ENCODE measurements at regions of chr21 and their contacts with region 1.

Region 1: DNA sequence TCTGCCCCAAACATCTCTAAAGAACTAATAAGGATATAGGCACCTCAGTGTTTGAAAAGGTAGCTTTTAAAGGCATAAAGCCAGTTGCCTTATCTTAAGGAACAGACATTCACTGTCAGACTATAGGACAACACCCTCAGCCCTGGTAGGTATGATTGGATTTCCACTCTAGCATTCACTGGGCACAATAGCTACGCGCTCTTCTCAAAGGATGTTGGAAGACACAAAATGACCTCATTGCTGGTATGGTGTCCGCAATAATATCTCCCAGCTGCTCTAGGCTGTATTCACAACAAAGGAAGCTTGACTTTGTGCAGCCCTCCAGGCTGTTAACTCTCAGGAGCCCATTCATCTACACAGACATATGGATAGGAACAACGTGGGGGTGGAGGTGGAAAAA is 119.4 kb upstream of the CXADR start:
- DNase-seq: no peak
- H3K4me3 ChIP-seq: no peak overlapping the region
- H3K27ac ChIP-seq: no peak overlapping the region
- H3K4me1 ChIP-seq: no peaks in the 10 kb centered on the region
- H3K27me3 ChIP-seq: no peaks in the 10 kb centered on the region
- CTCF ChIP-seq: no peak

Region 2: GRCh38 chr21:16908087-16908486 is 485.3 kb before region 1 on chr21:
- CTCF ChIA-PET with region 1: no interaction called
- POLR2A ChIA-PET with region 1: no interaction called
- intact Hi-C with region 1: no loop called
- DNase-seq: peak; percentile 1
- H3K4me3 ChIP-seq: no peak overlapping the region
- H3K27ac ChIP-seq: no peak overlapping the region
- H3K4me1 ChIP-seq: no peaks in the 10 kb centered on the region
- H3K27me3 ChIP-seq: no peaks in the 10 kb centered on the region
- CTCF ChIP-seq: no peak

Region 3: GRCh38 chr21:17427831-17428483 is 34.5 kb after region 1 on chr21:
- CTCF ChIA-PET with region 1: no interaction called
- POLR2A ChIA-PET with region 1: no interaction called
- intact Hi-C with region 1: loop called (anchors 2 kb)
- DNase-seq: no peak
- H3K4me3 ChIP-seq: no peak overlapping the region
- H3K27ac ChIP-seq: no peak overlapping the region
- H3K4me1 ChIP-seq: no peaks in the 10 kb centered on the region
- H3K27me3 ChIP-seq: no peaks in the 10 kb centered on the region
- CTCF ChIP-seq: no peak